A549 (cell line): ENCODE measurements at regions of chr15 and their contacts with region 1.

Region 1: DNA sequence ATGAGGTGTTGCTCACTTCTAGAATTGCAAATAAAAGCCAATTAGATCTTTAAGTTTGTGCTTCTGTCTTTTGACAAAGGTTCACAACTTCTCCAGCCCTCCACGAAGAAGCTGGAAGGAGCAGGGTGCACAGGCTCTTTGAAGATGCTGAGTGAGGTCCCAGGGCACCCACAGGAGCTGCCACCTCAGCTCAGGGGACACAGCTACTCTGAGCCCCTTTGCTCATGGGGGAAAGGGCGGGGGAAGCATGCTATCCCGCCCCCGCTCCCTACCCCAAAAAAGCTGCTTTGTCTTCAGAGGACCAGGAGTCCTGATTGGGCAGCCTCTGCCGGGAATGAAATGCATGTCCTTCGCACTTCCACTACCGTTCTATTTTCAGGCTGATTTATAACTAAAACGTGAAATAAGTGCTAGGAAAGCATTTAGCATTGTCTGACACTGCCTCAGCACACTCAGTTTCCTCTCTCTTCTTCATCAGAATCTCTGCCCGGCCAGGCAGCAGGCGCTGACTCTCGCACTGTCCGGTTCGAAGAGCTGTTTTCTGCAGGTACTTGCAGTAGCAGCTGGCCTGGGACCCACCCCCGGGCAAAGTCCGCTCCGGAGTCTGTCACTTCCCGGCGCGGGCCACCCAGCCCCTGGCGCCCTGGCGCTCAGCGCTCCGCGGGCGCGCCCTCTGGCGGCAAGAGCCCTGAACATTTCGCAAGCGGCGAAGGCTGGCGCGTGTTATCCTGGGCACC is 45.5 kb upstream of the KLHL25 start:
- DNase-seq: peak; percentile 90 to 91
- ATAC-seq: peak; percentile 90 to 94
- H3K4me3 ChIP-seq: peak overlapping the region; percentile 33
- H3K27ac ChIP-seq: peak overlapping the region; percentile 51 to 59; a peak in 5 of 6 replicates
- H3K4me1 ChIP-seq: peaks cover 26% of the 10 kb centered on the region
- CTCF ChIP-seq: peak; percentile 99
- EP300 ChIP-seq: no peak
- POLR2A ChIP-seq: no peak
- RAD21 ChIP-seq: peak; percentile 78 to 96

Region 2: GRCh38 chr15:85723960-85724945 is 116.0 kb before region 1 on chr15:
- CTCF ChIA-PET with region 1: interaction called, 67 read pairs
- POLR2A ChIA-PET with region 1: no interaction called
- DNase-seq: no peak
- ATAC-seq: no peak
- H3K4me3 ChIP-seq: no peak overlapping the region
- H3K27ac ChIP-seq: no peak overlapping the region
- H3K4me1 ChIP-seq: no peaks in the 10 kb centered on the region
- CTCF ChIP-seq: no peak
- EP300 ChIP-seq: no peak
- POLR2A ChIP-seq: no peak
- RAD21 ChIP-seq: no peak

Region 3: GRCh38 chr15:85737061-85737460 is 103.2 kb before region 1 on chr15:
- CTCF ChIA-PET with region 1: interaction called, 67 read pairs
- POLR2A ChIA-PET with region 1: no interaction called
- DNase-seq: no peak
- ATAC-seq: no peak
- H3K4me3 ChIP-seq: no peak overlapping the region
- H3K27ac ChIP-seq: no peak overlapping the region
- H3K4me1 ChIP-seq: no peaks in the 10 kb centered on the region
- CTCF ChIP-seq: no peak
- EP300 ChIP-seq: no peak
- POLR2A ChIP-seq: no peak
- RAD21 ChIP-seq: no peak

Region 4: DNA sequence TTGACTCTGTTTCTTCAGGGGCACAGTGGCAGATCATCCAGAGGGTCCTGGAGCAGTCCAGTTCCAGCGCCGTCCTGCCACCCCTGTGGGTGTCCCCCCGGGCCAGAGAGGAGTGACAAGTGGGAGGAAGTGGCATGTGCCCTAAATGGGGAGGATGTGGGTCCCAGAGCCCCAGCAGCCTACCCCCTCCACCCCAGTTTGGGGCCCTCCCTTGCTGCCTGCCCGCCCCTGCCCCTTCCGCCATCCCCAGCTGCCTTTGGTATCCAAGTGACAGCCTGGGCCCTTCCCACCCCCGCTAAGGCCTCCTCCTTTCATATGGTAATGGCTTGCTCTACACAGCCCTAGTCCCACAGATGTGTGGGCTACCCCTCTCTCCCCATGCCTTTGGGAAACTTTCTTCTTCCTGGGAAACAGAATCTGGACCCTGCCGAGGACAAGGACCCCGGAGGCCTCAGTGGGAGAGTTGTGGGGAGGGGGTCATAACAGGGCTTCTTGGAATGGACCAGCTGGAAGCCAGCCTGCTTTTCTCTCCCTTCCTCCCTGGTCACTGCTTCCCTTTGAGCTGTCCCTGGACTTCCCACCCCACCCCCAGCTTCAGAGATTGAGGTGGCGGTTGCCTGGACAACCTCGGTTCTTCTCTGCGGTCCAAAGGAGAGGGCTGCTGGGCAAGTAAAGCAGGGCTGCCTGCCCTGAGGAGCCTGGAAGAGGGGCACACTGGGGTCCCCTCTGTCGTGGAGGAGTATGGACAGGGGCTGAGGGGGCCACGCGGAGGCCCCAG is 88.7 kb before region 1 on chr15:
- CTCF ChIA-PET with region 1: interaction called, 12 read pairs
- POLR2A ChIA-PET with region 1: no interaction called
- DNase-seq: no peak
- ATAC-seq: peak in 1 of 2 experiments; percentile 29; a peak in 4 of 6 replicates
- H3K4me3 ChIP-seq: no peak overlapping the region
- H3K27ac ChIP-seq: 0 out of 6 replicates have a peak overlapping the region, but pooled peaks of 1 of the 2 experiments have one; percentile 8
- H3K4me1 ChIP-seq: no peaks in the 10 kb centered on the region
- CTCF ChIP-seq: no peak
- EP300 ChIP-seq: no peak
- POLR2A ChIP-seq: no peak
- RAD21 ChIP-seq: no peak

Region 5: GRCh38 chr15:85780225-85780985 is 59.8 kb before region 1 on chr15:
- CTCF ChIA-PET with region 1: interaction called, 26 read pairs
- POLR2A ChIA-PET with region 1: no interaction called
- DNase-seq: no peak
- ATAC-seq: no peak
- H3K4me3 ChIP-seq: no peak overlapping the region
- H3K27ac ChIP-seq: no peak overlapping the region
- H3K4me1 ChIP-seq: peaks cover 4% of the 10 kb centered on the region
- CTCF ChIP-seq: no peak
- EP300 ChIP-seq: no peak
- POLR2A ChIP-seq: no peak
- RAD21 ChIP-seq: no peak

Region 6: GRCh38 chr15:85800467-85801123 is 39.6 kb before region 1 on chr15:
- CTCF ChIA-PET with region 1: interaction called, 79 read pairs
- POLR2A ChIA-PET with region 1: interaction called, 3 read pairs
- DNase-seq: peak; percentile 87 to 91
- ATAC-seq: peak; percentile 95 to 98
- H3K4me3 ChIP-seq: no peak overlapping the region
- H3K27ac ChIP-seq: peak overlapping the region in 1 of 2 experiments; percentile 47; a peak in 3 of 6 replicates
- H3K4me1 ChIP-seq: peaks cover 15% of the 10 kb centered on the region
- CTCF ChIP-seq: peak; percentile 33
- EP300 ChIP-seq: no peak
- POLR2A ChIP-seq: no peak
- RAD21 ChIP-seq: peak; percentile 56 to 66

Region 7: GRCh38 chr15:85854345-85855097 is 14.3 kb after region 1 on chr15:
- CTCF ChIA-PET with region 1: interaction called, 18 read pairs
- POLR2A ChIA-PET with region 1: no interaction called
- DNase-seq: peak; percentile 76 to 88
- ATAC-seq: peak; percentile 64 to 81; a peak in 4 of 6 replicates
- H3K4me3 ChIP-seq: no peak overlapping the region
- H3K27ac ChIP-seq: no peak overlapping the region
- H3K4me1 ChIP-seq: no peaks in the 10 kb centered on the region
- CTCF ChIP-seq: peak; percentile 94
- EP300 ChIP-seq: no peak
- POLR2A ChIP-seq: no peak
- RAD21 ChIP-seq: peak; percentile 91 to 95